BJ (cell line): ENCODE measurements at regions of chr17 and their contacts with region 1.

Region 1: DNA sequence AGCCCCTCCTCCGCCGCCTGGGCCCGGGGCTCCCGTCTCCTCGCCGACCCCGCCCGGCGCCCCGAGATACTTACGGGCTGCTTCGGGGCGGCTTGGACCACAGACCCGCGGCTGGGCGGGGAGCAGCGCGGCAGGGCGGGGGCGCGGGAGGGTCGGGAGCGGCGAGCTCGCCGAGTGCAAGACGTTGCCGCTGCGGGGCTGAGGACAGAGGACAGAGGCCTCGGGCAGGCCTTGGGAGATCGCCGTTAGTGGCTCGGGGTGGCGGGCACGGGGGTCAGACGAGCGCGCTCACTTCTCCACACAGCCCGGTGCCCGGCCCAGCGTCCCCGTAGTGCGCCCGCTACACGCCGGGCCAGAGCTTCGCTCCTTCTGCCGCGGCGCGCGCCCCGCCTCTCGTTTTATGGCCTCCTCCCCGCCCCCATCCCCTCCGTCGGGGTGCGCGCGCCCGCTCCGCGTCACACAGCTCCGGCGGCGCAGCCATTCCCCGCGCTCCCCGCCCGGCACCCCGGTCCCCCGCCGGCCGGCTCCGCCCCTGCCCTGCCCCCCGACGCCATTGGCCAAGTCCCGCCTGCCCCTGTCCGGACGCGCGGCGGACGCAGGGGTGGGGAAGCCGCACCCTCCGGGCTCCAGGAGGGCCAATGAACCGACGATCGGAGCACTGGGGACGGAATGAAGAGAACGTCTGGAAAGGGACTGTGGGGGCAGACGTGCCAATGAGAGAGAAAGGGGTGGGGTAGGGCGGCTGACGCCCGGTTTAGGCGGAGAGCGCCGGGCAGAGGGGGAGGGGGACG is at the start of gene TOB1:
- DNase-seq: peak; percentile 80
- H3K4me3 ChIP-seq: peak within 1 kb of the TSS; percentile 95
- H3K27me3 ChIP-seq: no peaks in the 10 kb centered on the region
- CTCF ChIP-seq: no peak
- polyA plus RNA-seq, gene TOB1: 16.1 and 16.8 TPM in 2 replicates

Region 2: DNA sequence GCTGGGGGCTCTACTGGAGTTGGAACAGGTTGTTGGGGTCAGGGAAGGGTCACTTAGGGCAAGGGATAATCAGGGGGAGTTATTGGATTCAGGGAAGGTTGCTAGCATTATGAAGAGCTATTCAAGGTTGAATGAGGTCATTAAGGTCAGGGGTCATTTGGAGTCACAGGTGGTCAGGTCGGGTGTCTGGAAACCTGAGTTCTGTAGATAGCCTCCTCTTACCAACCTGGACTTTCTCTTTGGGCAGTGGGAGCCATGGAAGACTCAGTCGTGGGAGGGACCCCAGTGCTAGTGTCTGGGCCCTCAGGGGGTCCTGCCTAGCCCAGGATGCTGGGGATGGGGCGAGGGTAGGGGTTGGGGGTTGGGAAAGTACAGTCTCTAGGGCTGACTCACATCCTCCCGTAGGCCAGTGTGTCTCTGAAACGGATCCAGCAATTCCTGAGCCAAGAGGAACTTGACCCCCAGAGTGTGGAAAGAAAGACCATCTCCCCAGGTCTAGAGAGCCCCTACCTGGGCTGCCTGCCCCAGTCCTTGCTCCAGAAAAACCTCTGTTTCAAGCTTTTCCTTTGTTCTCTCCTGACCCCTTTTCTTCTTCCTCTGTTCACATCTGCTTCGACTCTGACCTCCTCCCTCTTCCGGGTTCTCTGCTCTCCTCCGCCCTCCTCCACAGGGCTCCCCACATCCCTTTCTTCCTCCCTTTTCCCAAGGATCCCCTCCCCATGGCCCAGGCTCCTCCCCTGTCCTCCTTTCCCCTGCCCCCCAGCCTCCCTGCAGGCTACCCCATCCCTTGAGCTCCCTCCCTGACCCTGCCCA is 197.9 kb before region 1 on chr17:
- CTCF ChIA-PET with region 1: no interaction called
- POLR2A ChIA-PET with region 1: interaction called, 15 read pairs
- DNase-seq: no peak
- H3K4me3 ChIP-seq: no peak overlapping the region
- H3K27me3 ChIP-seq: no peaks in the 10 kb centered on the region
- CTCF ChIP-seq: no peak

Region 3: DNA sequence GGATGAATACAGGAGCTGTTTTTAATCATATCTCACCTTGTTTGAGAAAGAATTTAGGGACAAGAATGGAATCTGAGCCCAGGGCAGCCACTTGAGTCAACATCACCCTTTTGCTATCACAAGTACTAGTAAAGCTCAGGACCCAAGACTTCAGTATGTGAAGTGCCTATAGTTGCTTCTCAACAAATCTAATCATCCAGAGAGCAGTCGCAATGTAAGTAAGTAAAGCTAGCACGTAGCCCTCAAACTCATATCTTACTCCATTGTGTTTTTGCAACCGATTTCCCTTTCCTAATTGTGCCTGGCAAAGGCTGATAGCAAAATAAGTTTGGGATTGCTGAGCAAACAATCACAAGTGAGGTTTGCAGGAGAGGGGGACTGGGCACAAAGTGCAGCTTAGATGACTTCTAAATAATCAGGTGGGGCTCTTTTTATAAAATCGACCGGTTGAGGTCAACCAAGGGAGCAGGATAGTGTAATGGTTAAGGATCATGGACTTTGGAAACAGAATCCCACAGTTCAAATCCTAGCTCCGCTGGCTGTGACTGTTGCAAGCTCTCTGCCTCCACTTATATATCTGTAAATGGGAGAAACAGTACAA is 13.1 kb before region 1 on chr17:
- CTCF ChIA-PET with region 1: interaction called, 54 read pairs
- POLR2A ChIA-PET with region 1: interaction called, 13 read pairs
- DNase-seq: no peak
- H3K4me3 ChIP-seq: no peak overlapping the region
- H3K27me3 ChIP-seq: peaks cover 1% of the 10 kb centered on the region; the same call in 1 of the 2 replicates
- CTCF ChIP-seq: no peak

Region 4: DNA sequence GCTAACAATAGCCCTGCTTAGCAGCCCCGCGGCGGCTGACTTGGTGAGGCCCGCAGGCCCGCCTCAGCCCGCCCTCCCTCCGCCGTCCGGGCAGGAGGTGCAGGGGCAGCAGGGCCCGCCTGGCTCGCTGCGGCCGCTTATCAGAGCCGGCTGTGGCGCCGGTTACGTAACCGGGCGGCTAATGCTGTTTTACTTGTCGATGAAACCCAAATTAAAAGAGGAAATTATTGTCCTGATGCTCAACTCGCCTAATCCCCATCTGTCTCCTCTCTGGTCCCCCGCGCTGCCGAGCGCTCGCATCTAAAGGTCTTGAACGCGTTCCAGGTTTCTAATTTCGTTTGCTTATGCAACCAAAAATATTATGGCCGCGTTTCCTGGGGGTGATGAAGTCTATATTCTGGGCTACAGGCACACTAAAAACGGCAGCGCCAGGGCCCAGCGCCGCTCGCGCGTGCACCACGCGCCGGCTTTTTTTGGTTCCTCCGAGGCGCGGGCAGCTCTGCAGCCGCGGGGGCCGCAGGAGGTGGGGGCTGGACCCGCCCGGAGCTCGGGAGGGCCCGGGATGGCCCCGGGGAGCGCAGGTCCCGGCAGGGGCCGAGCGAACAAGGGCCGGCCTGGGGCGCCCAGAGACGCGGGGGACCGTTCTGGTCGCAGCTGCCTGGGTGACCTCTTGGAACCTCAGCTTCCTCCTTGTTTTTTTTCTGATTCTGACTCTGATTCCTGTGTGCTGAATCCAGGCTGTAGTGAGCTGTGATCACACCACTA is 65.1 kb after region 1 on chr17:
- CTCF ChIA-PET with region 1: interaction called, 3 read pairs
- POLR2A ChIA-PET with region 1: interaction called, 10 read pairs
- DNase-seq: no peak
- H3K4me3 ChIP-seq: peak overlapping the region; percentile 32
- H3K27me3 ChIP-seq: no peaks in the 10 kb centered on the region
- CTCF ChIP-seq: no peak

Region 5: DNA sequence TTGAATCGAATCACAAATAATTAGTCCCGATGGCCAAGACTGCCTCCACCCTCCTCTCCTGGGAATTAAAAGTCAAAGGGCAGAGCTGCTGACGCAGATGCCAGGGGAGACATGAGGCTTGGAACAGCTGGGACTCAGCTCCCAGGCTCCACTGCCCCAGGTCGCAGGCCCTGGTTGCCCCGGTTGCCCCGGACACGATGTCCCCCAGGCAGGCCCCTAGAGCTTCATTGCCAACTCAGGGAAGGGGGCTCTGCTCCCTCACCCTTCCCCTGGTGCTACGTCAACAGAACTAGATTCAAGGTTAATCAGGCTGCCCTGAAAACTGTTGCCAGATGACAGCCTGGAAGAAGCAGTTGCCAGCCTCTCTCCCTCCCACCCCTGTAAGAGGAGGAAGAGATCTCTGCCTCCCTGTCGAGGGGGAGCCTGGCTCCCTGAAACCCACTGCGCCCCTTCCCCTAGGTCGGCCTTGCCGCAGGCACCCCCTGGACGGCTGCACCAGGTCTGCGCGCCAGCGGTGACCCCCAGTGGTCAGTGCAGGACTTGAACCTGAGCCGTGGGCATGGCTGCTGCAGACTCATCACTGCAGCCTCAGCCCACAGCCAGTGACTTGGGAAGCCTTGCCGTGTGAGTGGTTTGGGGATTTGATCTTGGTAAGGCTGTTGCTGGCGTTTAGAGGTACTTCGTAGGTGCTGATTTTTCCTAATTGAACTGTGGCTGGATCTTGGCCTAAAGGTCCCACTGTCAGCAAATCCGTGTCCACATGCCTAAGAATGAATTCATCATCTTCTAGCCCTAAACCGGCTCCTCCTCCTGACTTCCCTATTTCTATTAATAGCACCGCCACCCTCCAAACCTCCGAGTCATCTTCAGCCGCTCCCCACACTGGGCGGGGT is 84.1 kb after region 1 on chr17:
- CTCF ChIA-PET with region 1: interaction called, 14 read pairs
- POLR2A ChIA-PET with region 1: interaction called, 18 read pairs
- DNase-seq: peak; percentile 71
- H3K4me3 ChIP-seq: no peak overlapping the region
- H3K27me3 ChIP-seq: no peaks in the 10 kb centered on the region
- CTCF ChIP-seq: peak; percentile 73

Region 6: DNA sequence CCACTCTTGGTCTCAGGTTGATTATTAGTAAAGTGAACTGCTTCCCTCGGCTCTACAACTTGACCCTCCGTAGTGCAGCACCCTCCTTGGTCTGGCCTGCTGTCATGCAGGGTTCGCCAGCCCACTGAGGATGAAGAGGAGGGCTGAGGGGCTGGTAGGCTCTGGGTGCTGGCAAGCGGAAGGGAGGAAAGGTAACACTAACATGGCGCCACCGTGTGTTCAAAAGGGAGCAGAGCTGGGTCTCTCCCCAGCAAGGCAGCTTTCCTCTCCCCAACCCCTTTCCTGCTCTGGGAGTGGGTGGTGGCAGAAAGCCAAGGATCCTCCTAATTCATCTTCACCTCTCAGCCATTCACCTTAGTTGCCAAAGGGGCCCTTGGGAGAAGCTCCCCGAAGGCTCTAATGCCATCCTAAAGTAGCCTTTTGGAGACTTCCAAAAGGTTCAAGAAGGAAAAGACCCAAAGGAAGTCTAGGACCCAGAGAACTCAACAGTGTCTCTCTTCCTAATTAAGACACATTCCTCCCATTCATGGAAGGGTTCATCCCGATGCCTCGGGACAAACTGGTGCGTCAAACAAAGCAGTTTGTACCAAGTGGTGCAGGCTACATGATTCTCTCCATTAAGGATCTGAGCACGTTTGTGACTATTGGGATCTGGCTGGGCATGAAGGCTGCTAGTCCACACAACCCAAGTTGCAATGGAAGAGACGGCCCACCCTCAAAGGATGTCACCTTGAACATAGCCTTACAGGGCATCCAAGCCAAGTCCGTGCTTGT is 90.8 kb after region 1 on chr17:
- CTCF ChIA-PET with region 1: interaction called, 14 read pairs
- POLR2A ChIA-PET with region 1: interaction called, 12 read pairs
- DNase-seq: no peak
- H3K4me3 ChIP-seq: no peak overlapping the region
- H3K27me3 ChIP-seq: no peaks in the 10 kb centered on the region
- CTCF ChIP-seq: peak; percentile 82

Region 7: GRCh38 chr17:50986989-50987660 is 120.9 kb after region 1 on chr17:
- CTCF ChIA-PET with region 1: no interaction called
- POLR2A ChIA-PET with region 1: interaction called, 12 read pairs
- DNase-seq: no peak
- H3K4me3 ChIP-seq: no peak overlapping the region
- H3K27me3 ChIP-seq: no peaks in the 10 kb centered on the region
- CTCF ChIP-seq: no peak